ENCODE measurements at regions of chr16 and their contacts with region 1.

Region 1: GRCh38 chr16:66608241-66609138 is 4.0 kb downstream of the CMTM3 start:
- DNase-seq: peak; percentile 93
- H3K27ac ChIP-seq: peak overlapping the region; percentile 88
- CTCF ChIP-seq: peak; percentile 92

Region 2: DNA sequence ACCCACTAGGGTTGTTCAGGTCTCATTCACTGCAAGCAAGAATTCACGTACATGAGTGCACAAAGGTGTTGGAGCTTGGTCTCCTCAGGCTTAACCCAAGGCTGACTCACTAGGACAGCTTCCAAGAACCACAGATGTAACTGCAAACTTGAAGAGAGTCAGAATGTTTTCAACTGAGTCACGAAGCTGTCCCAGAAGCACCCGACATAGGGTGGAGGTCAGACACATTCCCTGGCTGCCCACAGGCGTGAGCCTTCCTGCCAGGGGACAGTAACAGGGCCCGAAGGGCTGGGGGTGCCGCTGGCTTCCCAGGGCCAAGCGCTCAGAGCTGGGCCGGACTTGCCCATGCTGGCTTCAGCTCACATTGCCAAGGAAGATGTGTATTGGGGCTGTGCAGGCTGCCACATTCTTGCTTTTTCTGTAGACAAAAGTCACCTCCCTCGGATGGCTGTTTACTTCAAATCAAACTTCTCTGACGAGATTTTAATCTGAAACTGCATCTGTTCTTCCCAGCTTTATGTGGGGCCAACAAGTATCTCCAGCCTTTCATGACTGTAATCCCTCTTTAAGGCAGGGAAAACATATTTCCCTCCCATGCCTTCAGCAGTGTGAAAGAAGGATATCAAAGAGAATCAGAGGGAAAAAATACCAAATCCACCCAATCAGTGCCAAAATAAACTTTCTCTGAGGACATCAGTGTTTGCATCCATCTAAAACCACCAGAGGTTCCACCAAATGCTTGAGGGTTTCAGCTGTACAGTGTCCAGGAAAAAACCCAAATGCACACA is 10.3 kb after region 1 on chr16:
- CTCF ChIA-PET with region 1: interaction called, 20 read pairs
- POLR2A ChIA-PET with region 1: interaction called, 3 read pairs
- DNase-seq: peak; percentile 88
- H3K27ac ChIP-seq: peak overlapping the region; percentile 93
- CTCF ChIP-seq: no peak

Region 3: DNA sequence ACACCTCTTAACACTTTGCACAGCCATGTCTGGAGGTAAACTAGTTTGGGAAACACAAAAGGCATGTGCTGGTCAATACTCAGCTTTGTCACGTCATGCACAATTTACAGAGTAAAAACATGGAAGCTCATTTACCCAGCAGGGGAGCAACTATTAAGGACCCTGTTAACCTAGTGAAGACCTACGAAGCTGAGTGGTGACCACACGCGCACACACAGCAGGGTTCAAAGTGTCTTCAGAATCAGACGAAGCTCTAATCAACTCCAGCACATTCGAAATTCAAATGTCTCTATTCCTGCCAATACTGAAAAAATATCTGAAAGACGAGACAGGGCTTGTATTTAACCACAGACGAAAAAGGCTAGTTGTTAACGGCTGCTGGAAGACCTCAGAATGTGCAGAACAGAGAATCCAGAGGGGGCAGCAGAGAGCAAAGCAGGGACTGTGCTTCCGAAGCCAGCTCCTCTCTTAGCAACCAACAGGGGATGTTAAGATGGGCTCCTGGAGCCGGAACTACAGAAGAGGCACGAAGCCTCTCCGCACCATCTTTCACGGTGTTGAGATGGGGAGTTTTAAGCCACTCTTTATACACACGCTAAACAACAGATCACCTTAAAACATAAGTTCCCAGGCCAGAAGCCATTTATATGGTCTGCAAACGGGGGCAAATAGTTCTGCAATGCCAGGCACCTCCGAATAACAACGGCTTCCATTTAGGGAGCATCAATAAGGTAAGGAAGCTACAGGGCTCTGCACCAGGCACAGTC is 42.4 kb after region 1 on chr16:
- CTCF ChIA-PET with region 1: interaction called, 18 read pairs
- POLR2A ChIA-PET with region 1: no interaction called
- DNase-seq: peak; percentile 74
- H3K27ac ChIP-seq: peak overlapping the region; percentile 23; the same call in 1 of the 2 replicates
- CTCF ChIP-seq: peak; percentile 95

Region 4: DNA sequence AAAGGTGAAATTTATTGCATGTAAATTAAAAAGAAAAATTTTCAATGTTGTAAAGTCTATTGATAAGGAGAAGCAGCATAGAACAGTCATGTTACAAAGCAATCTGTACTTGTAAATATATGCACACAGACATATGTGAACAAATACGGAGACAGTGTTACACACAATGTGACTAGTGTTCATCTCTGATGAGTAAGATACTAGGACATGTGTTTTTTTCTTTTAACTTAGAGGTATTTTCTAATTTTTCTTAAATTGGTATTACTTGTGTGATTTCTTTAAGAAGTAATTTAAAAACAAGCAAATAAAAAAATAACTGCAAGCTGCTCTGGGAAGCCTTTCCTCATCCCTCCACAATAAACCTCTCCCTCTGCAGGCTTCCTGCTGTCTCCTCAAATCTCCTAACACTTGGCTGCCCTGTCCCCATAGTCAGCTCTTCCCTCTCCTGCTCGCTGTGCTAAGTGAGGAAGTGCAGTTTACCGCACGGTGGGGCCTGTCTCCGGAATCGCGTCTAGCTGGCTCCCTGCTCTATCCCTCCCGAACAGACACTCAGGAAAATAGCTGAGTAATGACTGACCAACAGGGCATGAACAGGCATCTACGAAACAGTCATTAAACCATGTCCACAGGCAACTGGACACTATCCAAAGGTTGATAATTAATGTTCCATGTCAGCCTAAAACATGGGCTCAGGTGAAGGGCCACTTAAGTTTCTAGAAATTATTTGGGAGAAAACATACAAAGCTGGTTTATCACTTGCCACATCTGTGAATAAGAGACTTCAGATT is 52.1 kb after region 1 on chr16:
- CTCF ChIA-PET with region 1: interaction called, 14 read pairs
- POLR2A ChIA-PET with region 1: no interaction called
- DNase-seq: peak; percentile 74
- H3K27ac ChIP-seq: peak overlapping the region; percentile 74
- CTCF ChIP-seq: peak; percentile 19; the same call in 1 of the 2 replicates

Region 5: GRCh38 chr16:66832661-66833305 is 224.3 kb after region 1 on chr16:
- CTCF ChIA-PET with region 1: no interaction called
- POLR2A ChIA-PET with region 1: no interaction called
- DNase-seq: no peak
- H3K27ac ChIP-seq: no peak overlapping the region
- CTCF ChIP-seq: no peak

Measured in RWPE1 (cell line).